Keratinocyte (primary cell): ENCODE measurements at regions of chr15 and their contacts with region 1.

Region 1: DNA sequence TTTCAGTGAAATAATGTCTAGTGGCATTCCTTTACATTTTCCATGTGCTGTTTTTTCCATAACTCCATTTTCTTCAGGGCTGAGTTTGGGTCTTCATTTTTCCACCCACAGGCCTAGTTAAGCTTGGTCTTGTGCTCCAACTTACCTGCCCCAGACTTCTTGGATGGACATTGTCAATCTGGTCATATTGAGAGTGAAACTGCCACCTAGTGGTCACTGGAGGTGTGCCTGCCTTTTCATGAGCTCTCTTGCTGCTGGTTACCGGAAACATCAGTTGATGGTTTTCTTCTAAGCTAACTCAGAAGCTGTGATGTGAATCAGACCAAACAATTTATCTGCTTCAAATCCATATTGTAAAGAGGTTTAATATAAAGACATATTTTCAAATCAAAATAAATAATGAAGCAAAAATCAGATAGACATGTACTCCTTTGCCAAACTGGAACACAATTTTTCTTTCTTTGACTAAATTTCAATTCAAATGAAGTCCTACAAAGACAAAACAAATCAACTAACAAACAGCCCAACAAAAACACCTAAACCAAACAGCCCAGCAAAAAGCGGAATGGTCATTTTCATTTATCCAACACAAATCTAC is 135.1 kb upstream of the RASGRP1 start:
- DNase-seq: no peak
- H3K4me3 ChIP-seq: no peak overlapping the region
- H3K27ac ChIP-seq: no peak overlapping the region
- H3K4me1 ChIP-seq: peaks cover 3% of the 10 kb centered on the region
- H3K27me3 ChIP-seq: no peaks in the 10 kb centered on the region
- CTCF ChIP-seq: peak; percentile 78 to 94 (median 93)

Region 2: DNA sequence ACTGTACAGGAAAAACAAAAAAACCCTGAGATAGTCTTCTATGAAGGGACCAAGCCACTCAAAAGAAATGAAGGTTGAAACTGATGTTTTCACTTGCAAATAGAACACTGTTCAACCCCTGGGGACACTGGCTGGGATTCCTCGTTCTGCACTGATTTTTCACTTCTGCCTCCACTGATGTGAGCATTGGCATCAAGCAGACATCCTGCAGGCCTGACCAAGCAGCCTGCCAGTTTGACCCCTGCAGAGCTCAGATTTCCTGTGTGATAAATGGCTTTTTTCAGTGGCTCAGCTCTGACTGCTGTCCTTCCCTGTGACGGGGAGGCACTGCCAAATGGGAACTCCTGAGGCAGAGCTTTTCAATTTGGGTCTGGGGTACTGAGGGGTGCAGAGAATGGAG is 185.1 kb before region 1 on chr15:
- dilution Hi-C with region 1: loop called (anchors 25 kb)
- DNase-seq: no peak
- H3K4me3 ChIP-seq: no peak overlapping the region
- H3K27ac ChIP-seq: no peak overlapping the region
- H3K4me1 ChIP-seq: no peaks in the 10 kb centered on the region
- H3K27me3 ChIP-seq: peaks cover 9% of the 10 kb centered on the region
- CTCF ChIP-seq: no peak